ENCODE measurements at regions of chr4 and their contacts with region 1.

Region 1: GRCh38 chr4:102868781-102869568 is at the start of gene CISD2:
- DNase-seq: peak; percentile 91
- ATAC-seq: peak; percentile 86
- H3K4me3 Mint-ChIP-seq: peak within 1 kb of the TSS; percentile 97
- H3K27ac Mint-ChIP-seq: peak within 1 kb of the TSS; percentile 97
- H3K4me1 Mint-ChIP-seq: peaks cover 51% of the 10 kb centered on the region
- H3K27me3 Mint-ChIP-seq: no peaks in the 10 kb centered on the region
- CTCF ChIP-seq: no peak
- total RNA-seq, gene CISD2: 12.6 and 13.7 TPM in 2 replicates

Region 2: GRCh38 chr4:102466298-102466697 is 402.7 kb before region 1 on chr4:
- CTCF ChIA-PET with region 1: no interaction called
- POLR2A ChIA-PET with region 1: no interaction called
- intact Hi-C with region 1: no loop called
- DNase-seq: no peak
- ATAC-seq: no peak
- H3K4me3 Mint-ChIP-seq: no peak overlapping the region
- H3K27ac Mint-ChIP-seq: no peak overlapping the region
- H3K4me1 Mint-ChIP-seq: no peaks in the 10 kb centered on the region
- H3K27me3 Mint-ChIP-seq: peaks cover 7% of the 10 kb centered on the region
- CTCF ChIP-seq: no peak

Region 3: DNA sequence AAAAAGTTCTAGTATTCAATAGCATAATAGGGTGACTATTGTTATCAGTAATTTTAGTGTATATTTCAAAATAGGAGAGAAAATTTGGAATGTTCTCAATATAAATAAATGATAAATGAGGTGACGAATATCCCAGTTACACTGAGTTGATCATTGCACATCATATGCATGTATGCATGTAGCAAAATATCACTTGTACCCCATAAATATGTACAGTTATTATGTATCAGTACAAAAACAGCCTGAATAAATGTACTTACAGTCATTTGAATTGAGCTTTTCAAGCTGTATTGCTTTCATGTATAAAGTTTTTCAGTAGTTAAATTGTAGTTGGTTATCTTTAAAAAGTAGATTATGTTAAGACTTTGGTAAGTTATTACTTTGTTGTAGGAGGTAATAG is 12.4 kb after region 1 on chr4:
- CTCF ChIA-PET with region 1: no interaction called
- POLR2A ChIA-PET with region 1: no interaction called
- intact Hi-C with region 1: no loop called
- DNase-seq: no peak
- ATAC-seq: no peak
- H3K4me3 Mint-ChIP-seq: no peak overlapping the region
- H3K27ac Mint-ChIP-seq: no peak overlapping the region
- H3K4me1 Mint-ChIP-seq: no peaks in the 10 kb centered on the region
- H3K27me3 Mint-ChIP-seq: no peaks in the 10 kb centered on the region
- CTCF ChIP-seq: no peak

Region 4: DNA sequence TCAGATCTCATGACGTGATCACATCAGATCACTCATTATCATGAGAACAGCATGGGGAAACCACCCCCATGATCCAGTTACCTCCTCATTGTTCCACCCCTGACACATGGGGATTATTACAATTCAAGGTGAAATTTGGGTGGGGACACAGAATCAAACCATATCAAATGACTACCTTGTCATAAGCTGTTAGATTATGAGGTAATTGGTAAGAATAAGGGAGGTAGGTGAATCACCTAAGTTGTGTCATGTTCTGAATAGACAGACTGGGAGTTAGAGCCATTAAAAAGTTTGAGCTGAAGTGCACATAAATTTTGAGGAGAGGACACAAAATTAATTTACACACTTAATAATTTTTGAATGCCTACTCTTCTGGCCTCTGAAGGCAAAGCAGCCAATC is 125.8 kb after region 1 on chr4:
- CTCF ChIA-PET with region 1: no interaction called
- POLR2A ChIA-PET with region 1: no interaction called
- intact Hi-C with region 1: loop called (anchors 5 kb)
- DNase-seq: no peak
- ATAC-seq: no peak
- H3K4me3 Mint-ChIP-seq: no peak overlapping the region
- H3K27ac Mint-ChIP-seq: no peak overlapping the region
- H3K4me1 Mint-ChIP-seq: no peaks in the 10 kb centered on the region
- H3K27me3 Mint-ChIP-seq: no peaks in the 10 kb centered on the region
- CTCF ChIP-seq: no peak

Region 5: GRCh38 chr4:103019308-103020124 is 150.5 kb after region 1 on chr4 and contains the start of gene SLC9B1:
- CTCF ChIA-PET with region 1: no interaction called
- POLR2A ChIA-PET with region 1: interaction called, 5 read pairs
- intact Hi-C with region 1: loop called (anchors 1 kb)
- DNase-seq: peak; percentile 91
- ATAC-seq: peak; percentile 98
- H3K4me3 Mint-ChIP-seq: peak within 1 kb of the TSS; percentile 92
- H3K27ac Mint-ChIP-seq: peak within 1 kb of the TSS; percentile 96
- H3K4me1 Mint-ChIP-seq: peaks cover 28% of the 10 kb centered on the region
- H3K27me3 Mint-ChIP-seq: no peaks in the 10 kb centered on the region
- CTCF ChIP-seq: no peak
- total RNA-seq, gene SLC9B1: 1.2 and 2.5 TPM in 2 replicates

Region 6: GRCh38 chr4:103075901-103076739 is 207.1 kb after region 1 on chr4:
- CTCF ChIA-PET with region 1: no interaction called
- POLR2A ChIA-PET with region 1: no interaction called
- intact Hi-C with region 1: loop called (anchors 2 kb)
- DNase-seq: peak; percentile 69
- ATAC-seq: peak; percentile 64
- H3K4me3 Mint-ChIP-seq: peak overlapping the region; percentile 96
- H3K27ac Mint-ChIP-seq: peak overlapping the region; percentile 99
- H3K4me1 Mint-ChIP-seq: peaks cover 45% of the 10 kb centered on the region
- H3K27me3 Mint-ChIP-seq: no peaks in the 10 kb centered on the region
- CTCF ChIP-seq: no peak

Region 7: DNA sequence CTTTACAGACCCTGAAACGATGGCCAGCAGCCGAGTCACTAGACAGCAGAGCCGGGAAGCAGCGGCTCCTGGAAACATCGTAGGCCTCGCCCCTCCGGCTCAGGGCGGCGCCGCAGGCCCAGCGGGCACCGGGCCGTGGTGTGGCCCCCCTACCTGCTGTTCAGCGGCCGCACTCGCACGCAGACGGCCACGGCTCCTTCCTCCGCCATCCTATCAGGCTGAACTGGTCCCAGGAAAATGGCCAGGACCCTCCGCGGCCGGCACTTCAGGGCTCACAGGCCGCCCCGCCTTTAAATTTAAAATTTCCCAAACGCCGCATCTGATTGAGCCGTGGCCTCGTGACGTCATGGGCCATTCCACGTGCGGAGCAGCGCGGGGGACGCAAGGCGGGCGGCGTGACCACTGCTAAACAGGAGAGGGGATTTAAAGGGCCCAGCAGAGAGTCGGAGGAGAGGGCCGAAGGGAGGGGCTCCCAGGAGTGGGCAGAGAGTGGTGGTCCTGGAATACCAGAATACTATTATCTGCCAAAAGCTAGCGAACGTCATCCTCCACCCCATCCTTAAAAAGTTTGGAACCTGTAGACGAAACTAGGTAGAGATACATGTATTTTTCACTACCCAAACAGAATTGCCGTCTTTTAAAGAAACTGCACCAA is 329.3 kb after region 1 on chr4 and contains the start of gene CENPE:
- CTCF ChIA-PET with region 1: no interaction called
- POLR2A ChIA-PET with region 1: no interaction called
- intact Hi-C with region 1: loop called (anchors 2 kb)
- DNase-seq: peak; percentile 83
- ATAC-seq: peak; percentile 94
- H3K4me3 Mint-ChIP-seq: peak within 1 kb of the TSS; percentile 93
- H3K27ac Mint-ChIP-seq: peak within 1 kb of the TSS; percentile 91
- H3K4me1 Mint-ChIP-seq: peaks cover 10% of the 10 kb centered on the region
- H3K27me3 Mint-ChIP-seq: no peaks in the 10 kb centered on the region
- CTCF ChIP-seq: no peak
- total RNA-seq, gene CENPE: 2.4 and 2.5 TPM in 2 replicates